Naive thymus-derived CD4-positive, alpha-beta T cell (primary cell): ENCODE measurements at regions of chr13 and their contacts with region 1.

Region 1: GRCh38 chr13:73776151-73776785 is 357.9 kb downstream of the KLF12 start:
- DNase-seq: no peak
- ATAC-seq: no peak
- H3K4me3 ChIP-seq: no peak overlapping the region
- H3K4me3 Mint-ChIP-seq: peak overlapping the region in 1 of 10 donors; percentile 15
- H3K27ac ChIP-seq: no peak overlapping the region
- H3K27ac Mint-ChIP-seq: peak overlapping the region in 8 of 9 donors; percentile 45 to 84 (median 60)
- H3K4me1 ChIP-seq: peaks cover 0 to 8% of the 10 kb centered on the region in 2 donors
- H3K4me1 Mint-ChIP-seq: peaks cover 0 to 53% (median 43%) of the 10 kb centered on the region in 7 donors
- H3K27me3 ChIP-seq: no peaks in the 10 kb centered on the region
- H3K27me3 Mint-ChIP-seq: no peaks in the 10 kb centered on the region

Region 2: GRCh38 chr13:73715114-73715910 is 61.0 kb before region 1 on chr13:
- CTCF ChIA-PET with region 1: no interaction called
- POLR2A ChIA-PET with region 1: no interaction called
- intact Hi-C with region 1: no loop called
- DNase-seq: peak in 8 of 9 donors; percentile 53 to 85 (median 77)
- ATAC-seq: peak; percentile 90
- H3K4me3 ChIP-seq: peak overlapping the region; percentile 7
- H3K4me3 Mint-ChIP-seq: peak overlapping the region; percentile 72 to 86 (median 78)
- H3K27ac ChIP-seq: peak overlapping the region; percentile 67
- H3K27ac Mint-ChIP-seq: peak overlapping the region; percentile 87 to 99 (median 97)
- H3K4me1 ChIP-seq: peaks cover 34 to 43% of the 10 kb centered on the region in 2 donors
- H3K4me1 Mint-ChIP-seq: peaks cover 25 to 80% (median 58%) of the 10 kb centered on the region in 7 donors
- H3K27me3 ChIP-seq: no peaks in the 10 kb centered on the region
- H3K27me3 Mint-ChIP-seq: no peaks in the 10 kb centered on the region

Region 3: DNA sequence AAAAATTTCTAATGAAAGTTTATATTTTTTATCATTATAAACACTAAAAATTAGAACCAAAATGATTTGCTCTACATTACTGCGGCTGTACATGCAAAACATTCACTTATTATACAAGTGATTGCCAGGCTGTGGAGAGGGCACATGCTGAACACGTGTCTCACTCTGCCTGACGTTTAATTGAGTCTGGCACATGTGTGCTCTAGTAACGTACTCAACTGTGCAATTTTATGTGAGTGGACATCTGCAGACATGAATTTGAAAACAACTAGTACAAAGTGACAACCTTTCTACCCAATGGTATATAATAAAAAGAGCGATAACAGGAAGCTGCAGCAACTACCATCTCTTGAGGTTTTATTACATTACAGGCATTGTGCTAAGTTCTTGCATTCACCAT is 16.5 kb after region 1 on chr13:
- CTCF ChIA-PET with region 1: no interaction called
- POLR2A ChIA-PET with region 1: interaction called, 3 read pairs
- intact Hi-C with region 1: loop called in 1 of 2 experiments (anchors 2 kb)
- DNase-seq: no peak
- ATAC-seq: no peak
- H3K4me3 ChIP-seq: no peak overlapping the region
- H3K4me3 Mint-ChIP-seq: peak overlapping the region in 2 of 10 donors; percentile 5 to 34
- H3K27ac ChIP-seq: no peak overlapping the region
- H3K27ac Mint-ChIP-seq: peak overlapping the region in 4 of 9 donors; percentile 23 to 75 (median 52)
- H3K4me1 ChIP-seq: peaks cover 0 to 7% of the 10 kb centered on the region in 2 donors
- H3K4me1 Mint-ChIP-seq: peaks cover 0 to 70% (median 54%) of the 10 kb centered on the region in 7 donors
- H3K27me3 ChIP-seq: no peaks in the 10 kb centered on the region
- H3K27me3 Mint-ChIP-seq: no peaks in the 10 kb centered on the region